ENCODE measurements at regions of chr16 and their contacts with region 1.

Region 1: GRCh38 chr16:23729503-23730424 is 16.7 kb upstream of the ERN2 start:
- DNase-seq: no peak
- H3K4me3 ChIP-seq: no peak overlapping the region
- H3K4me3 Mint-ChIP-seq: no peak overlapping the region
- H3K27ac ChIP-seq: no peak overlapping the region
- H3K27ac Mint-ChIP-seq: peak overlapping the region in 1 of 7 donors; percentile 20
- H3K4me1 ChIP-seq: peaks cover 0 to 4% of the 10 kb centered on the region in 2 donors
- H3K4me1 Mint-ChIP-seq: peaks cover 9% of the 10 kb centered on the region
- H3K27me3 ChIP-seq: no peaks in the 10 kb centered on the region
- H3K27me3 Mint-ChIP-seq: peaks cover 0 to 12% (median 2%) of the 10 kb centered on the region in 3 donors
- CTCF ChIP-seq: no peak

Region 2: GRCh38 chr16:23771642-23772041 is 41.9 kb after region 1 on chr16:
- intact Hi-C with region 1: no loop called
- DNase-seq: no peak
- H3K4me3 ChIP-seq: no peak overlapping the region
- H3K4me3 Mint-ChIP-seq: no peak overlapping the region
- H3K27ac ChIP-seq: no peak overlapping the region
- H3K27ac Mint-ChIP-seq: no peak overlapping the region
- H3K4me1 ChIP-seq: no peaks in the 10 kb centered on the region
- H3K4me1 Mint-ChIP-seq: no peaks in the 10 kb centered on the region
- H3K27me3 ChIP-seq: peaks cover 5 to 8% of the 10 kb centered on the region in 2 donors
- H3K27me3 Mint-ChIP-seq: peaks cover 12 to 20% (median 16%) of the 10 kb centered on the region in 3 donors
- CTCF ChIP-seq: no peak

Region 3: DNA sequence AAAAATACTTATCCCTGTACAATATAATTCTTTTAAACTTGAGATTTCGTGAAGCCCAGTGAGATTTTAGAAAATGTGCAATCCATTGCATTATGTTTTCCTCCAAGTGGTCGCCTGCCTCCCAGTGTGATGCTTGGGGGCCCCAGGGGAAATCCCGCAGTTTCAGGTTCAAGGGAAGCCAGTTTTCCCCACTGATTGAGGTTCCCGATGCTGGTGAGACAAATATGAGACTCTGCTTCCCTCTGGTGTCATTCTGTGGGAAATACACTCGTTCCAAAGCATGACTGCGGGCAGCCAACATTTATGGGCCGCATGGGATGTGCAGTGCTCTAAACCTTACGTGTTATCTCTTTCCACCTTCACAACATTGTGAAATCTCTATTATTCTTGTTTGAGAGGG is 306.9 kb after region 1 on chr16:
- intact Hi-C with region 1: loop called in 1 of 2 experiments (anchors 10 kb)
- DNase-seq: peak; percentile 13 to 29 (median 24)
- H3K4me3 ChIP-seq: no peak overlapping the region
- H3K4me3 Mint-ChIP-seq: no peak overlapping the region
- H3K27ac ChIP-seq: no peak overlapping the region
- H3K27ac Mint-ChIP-seq: peak overlapping the region in 2 of 7 donors; percentile 13 to 22
- H3K4me1 ChIP-seq: peaks cover 15 to 22% of the 10 kb centered on the region in 2 donors
- H3K4me1 Mint-ChIP-seq: peaks cover 30% of the 10 kb centered on the region
- H3K27me3 ChIP-seq: no peaks in the 10 kb centered on the region
- H3K27me3 Mint-ChIP-seq: peaks cover 0 to 2% (median 1%) of the 10 kb centered on the region in 3 donors
- CTCF ChIP-seq: peak; percentile 79

Region 4: DNA sequence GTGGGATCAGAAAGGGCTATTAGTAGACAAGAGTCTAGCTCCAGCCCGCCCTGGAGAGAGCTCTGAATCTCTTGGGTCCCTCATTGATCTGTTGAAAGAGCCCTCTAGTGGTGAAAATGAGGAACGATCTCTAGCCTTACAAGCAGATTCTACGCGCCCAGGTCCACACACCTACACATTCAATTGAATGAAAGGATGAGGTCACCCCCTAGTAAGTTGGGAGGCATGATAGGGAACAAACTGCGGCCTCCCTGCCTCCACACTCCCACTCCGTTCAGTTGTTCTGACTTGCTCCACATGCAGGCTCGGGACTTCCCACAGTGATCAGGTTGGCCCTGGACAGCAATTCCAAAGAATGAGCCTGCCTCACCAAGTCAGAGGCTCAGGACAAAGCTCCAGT is 523.4 kb after region 1 on chr16:
- intact Hi-C with region 1: loop called in 1 of 2 experiments (anchors 10 kb)
- DNase-seq: peak; percentile 12 to 44 (median 40)
- H3K4me3 ChIP-seq: no peak overlapping the region
- H3K4me3 Mint-ChIP-seq: peak overlapping the region in 1 of 2 donors; percentile 68
- H3K27ac ChIP-seq: no peak overlapping the region
- H3K27ac Mint-ChIP-seq: no peak overlapping the region
- H3K4me1 ChIP-seq: no peaks in the 10 kb centered on the region
- H3K4me1 Mint-ChIP-seq: peaks cover 3% of the 10 kb centered on the region
- H3K27me3 ChIP-seq: peaks cover 20 to 41% of the 10 kb centered on the region in 2 donors
- H3K27me3 Mint-ChIP-seq: peaks cover 39 to 44% (median 44%) of the 10 kb centered on the region in 3 donors
- CTCF ChIP-seq: peak; percentile 92

Region 5: GRCh38 chr16:24504472-24505345 is 774.9 kb after region 1 on chr16:
- intact Hi-C with region 1: loop called in 1 of 2 experiments (anchors 10 kb)
- DNase-seq: peak; percentile 25 to 51 (median 37)
- H3K4me3 ChIP-seq: no peak overlapping the region
- H3K4me3 Mint-ChIP-seq: no peak overlapping the region
- H3K27ac ChIP-seq: no peak overlapping the region
- H3K27ac Mint-ChIP-seq: no peak overlapping the region
- H3K4me1 ChIP-seq: no peaks in the 10 kb centered on the region
- H3K4me1 Mint-ChIP-seq: peaks cover 1% of the 10 kb centered on the region
- H3K27me3 ChIP-seq: no peaks in the 10 kb centered on the region
- H3K27me3 Mint-ChIP-seq: peaks cover 3 to 15% (median 11%) of the 10 kb centered on the region in 3 donors
- CTCF ChIP-seq: peak; percentile 82

Measured in CD14-positive monocyte (primary cell).